Spleen (tissue), 13 donors: ENCODE measurements at regions of chr14 and their contacts with region 1.

Region 1: GRCh38 chr14:21408147-21408546 is 24.3 kb upstream of the SUPT16H start:
- DNase-seq: no peak
- H3K4me3 ChIP-seq: no peak overlapping the region
- H3K27ac ChIP-seq: no peak overlapping the region
- H3K4me1 ChIP-seq: no peaks in the 10 kb centered on the region
- H3K27me3 ChIP-seq: no peaks in the 10 kb centered on the region
- CTCF ChIP-seq: no peak
- POLR2A ChIP-seq: no peak

Region 2: GRCh38 chr14:21352587-21352986 is 55.6 kb before region 1 on chr14:
- intact Hi-C with region 1: loop called (anchors 10 kb)
- DNase-seq: no peak
- H3K4me3 ChIP-seq: peak overlapping the region in 1 of 8 donors; percentile 2
- H3K27ac ChIP-seq: peak overlapping the region in 5 of 8 donors; percentile 44 to 76 (median 65)
- H3K4me1 ChIP-seq: peaks cover 0 to 13% (median 3%) of the 10 kb centered on the region in 6 donors
- H3K27me3 ChIP-seq: no peaks in the 10 kb centered on the region
- CTCF ChIP-seq: no peak
- POLR2A ChIP-seq: no peak